PC-9 (cell line): ENCODE measurements at regions of chr5 and their contacts with region 1.

Region 1: GRCh38 chr5:132813599-132814502 is 749 bp downstream of the SOWAHA start:
- DNase-seq: no peak
- H3K4me3 ChIP-seq: no peak overlapping the region
- H3K27ac ChIP-seq: no peak overlapping the region
- H3K4me1 ChIP-seq: peaks cover 21% of the 10 kb centered on the region
- H3K27me3 ChIP-seq: no peaks in the 10 kb centered on the region
- CTCF ChIP-seq: no peak

Region 2: DNA sequence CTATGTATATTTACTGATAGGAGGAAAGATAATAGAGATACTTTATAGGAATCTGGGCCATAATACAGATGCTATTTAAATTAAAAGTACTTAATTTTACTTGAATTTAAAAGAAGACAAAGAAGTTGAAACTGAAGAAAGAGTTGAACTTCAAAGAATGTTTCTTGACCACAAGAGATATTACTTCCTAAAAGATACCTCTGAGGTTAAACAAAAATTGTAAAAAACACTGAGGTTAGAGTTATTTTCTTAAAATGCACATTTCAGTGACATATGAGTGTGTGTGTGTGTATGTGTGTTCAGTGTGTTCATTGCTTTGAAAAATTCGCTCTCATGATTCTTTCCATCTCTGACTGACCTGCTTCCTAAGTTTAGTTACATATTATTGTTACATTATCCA is 33.3 kb before region 1 on chr5:
- CTCF ChIA-PET with region 1: no interaction called
- POLR2A ChIA-PET with region 1: interaction called, 11 read pairs
- intact Hi-C with region 1: no loop called
- DNase-seq: no peak
- H3K4me3 ChIP-seq: no peak overlapping the region
- H3K27ac ChIP-seq: no peak overlapping the region
- H3K4me1 ChIP-seq: peaks cover 8% of the 10 kb centered on the region
- H3K27me3 ChIP-seq: no peaks in the 10 kb centered on the region; the same call in 1 of the 2 replicates
- CTCF ChIP-seq: no peak

Region 3: GRCh38 chr5:132797651-132798050 is 16.2 kb before region 1 on chr5:
- CTCF ChIA-PET with region 1: no interaction called
- POLR2A ChIA-PET with region 1: interaction called, 14 read pairs
- intact Hi-C with region 1: no loop called
- DNase-seq: no peak
- H3K4me3 ChIP-seq: no peak overlapping the region
- H3K27ac ChIP-seq: no peak overlapping the region
- H3K4me1 ChIP-seq: no peaks in the 10 kb centered on the region
- H3K27me3 ChIP-seq: no peaks in the 10 kb centered on the region
- CTCF ChIP-seq: no peak